Activated B cell treated with CpG ODN at 0.5 μM for 24 hours (primary cell): ENCODE measurements at regions of chr7 and their contacts with region 1.

Region 1: DNA sequence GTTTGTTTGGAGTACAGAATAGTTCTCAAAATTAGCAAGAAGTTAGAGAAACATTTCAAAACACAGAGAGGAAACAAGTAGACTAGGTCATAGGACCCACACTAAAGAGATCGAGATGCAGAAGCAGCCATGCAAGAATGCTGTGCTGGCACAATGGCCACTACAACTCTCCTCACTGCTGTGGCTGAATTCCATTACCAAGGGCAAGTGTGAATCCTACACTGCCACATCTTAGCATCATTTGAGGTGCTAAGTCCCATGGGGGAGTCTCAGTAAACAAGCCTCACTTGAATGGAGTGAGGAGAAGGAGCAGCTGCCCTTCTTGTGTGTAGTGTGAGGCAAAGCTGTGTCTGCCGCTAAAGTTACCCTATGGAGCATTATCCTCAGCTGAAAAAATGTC is 56.7 kb downstream of the PCLO start:
- DNase-seq: no peak
- ATAC-seq: no peak
- H3K4me3 Mint-ChIP-seq: no peak overlapping the region
- H3K27ac Mint-ChIP-seq: no peak overlapping the region
- H3K4me1 Mint-ChIP-seq: no peaks in the 10 kb centered on the region
- H3K27me3 Mint-ChIP-seq: no peaks in the 10 kb centered on the region
- CTCF ChIP-seq: no peak

Region 2: DNA sequence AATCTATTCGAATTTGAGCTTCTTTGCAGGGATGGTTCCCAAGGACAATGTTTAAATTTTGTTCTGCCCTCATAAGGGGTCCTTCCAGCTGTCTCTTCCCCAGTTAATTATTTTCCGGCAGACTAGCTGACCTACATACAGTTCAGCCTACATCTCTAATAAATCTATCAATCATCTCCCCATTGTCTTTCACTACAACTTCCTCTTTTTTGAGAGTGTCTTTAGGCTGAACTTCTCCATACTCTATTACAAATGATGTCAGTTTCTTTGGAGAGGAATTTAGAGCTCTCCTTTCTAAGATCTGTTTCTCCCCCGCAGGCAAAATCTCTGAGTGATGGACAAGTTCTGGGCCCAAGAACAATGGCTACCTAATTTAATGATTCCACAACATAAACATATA is 65.5 kb before region 1 on chr7:
- CTCF ChIA-PET with region 1: no interaction called
- POLR2A ChIA-PET with region 1: no interaction called
- intact Hi-C with region 1: loop called (anchors 10 kb)
- DNase-seq: no peak
- ATAC-seq: no peak
- H3K4me3 Mint-ChIP-seq: no peak overlapping the region
- H3K27ac Mint-ChIP-seq: no peak overlapping the region
- H3K4me1 Mint-ChIP-seq: no peaks in the 10 kb centered on the region
- H3K27me3 Mint-ChIP-seq: no peaks in the 10 kb centered on the region
- CTCF ChIP-seq: no peak

Region 3: DNA sequence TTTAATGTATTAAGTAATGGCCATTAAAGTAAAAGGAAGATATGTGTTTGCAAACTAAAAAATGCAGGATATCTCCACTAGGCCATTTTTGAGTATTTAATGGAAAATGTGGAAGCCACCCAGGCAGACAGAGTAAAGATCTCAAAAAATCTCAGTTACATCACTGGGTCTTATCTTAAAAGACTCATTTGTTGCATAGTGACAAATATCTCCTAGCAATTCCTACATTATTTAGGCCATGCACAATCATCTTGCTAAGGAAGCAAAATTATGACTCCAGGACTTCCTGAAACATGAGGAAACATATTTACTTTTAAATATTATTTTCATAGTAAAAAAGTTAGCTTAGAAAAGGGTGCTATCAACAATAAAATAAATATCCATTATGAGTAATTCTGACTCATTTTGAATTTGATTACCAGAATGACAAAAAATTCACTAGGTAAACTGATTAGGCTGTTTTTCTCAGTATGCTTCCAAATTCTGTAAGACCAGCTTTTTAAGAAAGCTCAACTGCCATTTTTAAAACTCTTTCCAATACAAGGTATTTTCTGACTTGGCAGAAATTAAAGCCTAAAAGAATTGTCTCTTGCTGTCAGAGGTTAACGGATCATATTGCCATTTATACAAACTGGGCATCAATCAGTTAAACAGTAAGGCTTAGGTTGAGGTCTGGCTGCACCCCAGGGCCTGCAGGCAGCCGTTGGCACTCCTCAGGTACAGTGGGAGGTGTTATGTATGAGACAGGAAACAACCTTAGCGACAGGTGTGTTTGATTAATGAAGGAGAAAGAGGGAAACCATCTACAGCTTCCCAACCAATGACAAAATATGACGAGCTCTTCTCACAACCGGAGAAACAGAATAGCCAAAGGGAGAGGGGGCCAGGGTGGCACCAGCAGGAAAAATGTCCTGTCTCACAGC is 24.9 kb after region 1 on chr7:
- CTCF ChIA-PET with region 1: no interaction called
- POLR2A ChIA-PET with region 1: no interaction called
- intact Hi-C with region 1: loop called (anchors 1 kb)
- DNase-seq: no peak
- ATAC-seq: no peak
- H3K4me3 Mint-ChIP-seq: no peak overlapping the region
- H3K27ac Mint-ChIP-seq: no peak overlapping the region
- H3K4me1 Mint-ChIP-seq: no peaks in the 10 kb centered on the region
- H3K27me3 Mint-ChIP-seq: no peaks in the 10 kb centered on the region
- CTCF ChIP-seq: no peak